CD14-positive monocyte (primary cell): ENCODE measurements at regions of chr16 and their contacts with region 1.

Region 1: DNA sequence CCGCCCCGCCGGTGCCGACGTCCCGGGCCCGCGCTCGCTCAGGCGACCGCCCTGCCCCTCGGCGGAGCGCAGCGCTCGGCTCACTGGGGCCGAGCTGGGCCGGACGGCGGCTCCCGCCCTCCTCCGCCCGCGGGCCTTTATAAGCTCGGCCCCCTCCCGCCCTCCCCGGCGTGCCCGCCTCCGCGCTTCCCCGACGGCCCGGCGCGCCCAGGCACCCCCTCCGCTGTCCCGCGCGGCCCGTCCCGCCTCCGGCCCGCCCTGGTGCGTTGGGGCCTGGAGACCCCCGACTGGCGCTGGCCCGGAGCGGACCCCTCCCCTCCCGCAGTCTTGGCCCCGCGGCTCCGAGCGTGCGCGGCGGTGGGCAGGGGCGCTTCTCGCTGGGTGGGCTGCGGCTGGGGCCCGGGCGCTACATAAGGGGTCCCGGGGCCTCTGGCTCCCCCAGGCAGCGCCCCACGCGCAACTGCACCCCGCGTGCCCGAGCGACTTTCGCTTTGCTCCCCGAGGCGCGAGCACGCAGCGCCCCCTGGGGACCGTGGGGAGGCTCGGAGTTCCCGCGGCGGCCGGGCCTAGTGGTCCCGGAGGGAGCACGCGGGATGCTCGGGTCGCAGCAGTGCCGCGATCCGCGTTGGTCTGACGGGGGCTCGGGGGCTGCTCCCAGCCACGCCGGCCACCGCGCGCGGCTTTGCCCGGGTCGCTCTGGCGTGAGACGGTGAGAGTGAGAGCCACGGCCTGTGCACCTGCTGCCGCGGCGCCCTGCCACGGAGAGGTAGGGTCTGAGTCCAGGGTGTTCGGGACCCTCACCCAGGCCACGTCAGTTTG is at the start of gene PIEZO1:
- DNase-seq: peak; percentile 62 to 75 (median 71)
- H3K4me3 ChIP-seq: peak within 1 kb of the TSS; percentile 47 to 80 (median 73)
- H3K4me3 Mint-ChIP-seq: peak within 1 kb of the TSS; percentile 90 to 93
- H3K27ac ChIP-seq: peak within 1 kb of the TSS; percentile 86 to 99
- H3K27ac Mint-ChIP-seq: peak within 1 kb of the TSS in 6 of 7 donors; percentile 87 to 95 (median 90)
- H3K4me1 ChIP-seq: peaks cover 56 to 64% of the 10 kb centered on the region in 2 donors
- H3K4me1 Mint-ChIP-seq: peaks cover 48% of the 10 kb centered on the region
- H3K27me3 ChIP-seq: no peaks in the 10 kb centered on the region
- H3K27me3 Mint-ChIP-seq: peaks cover 0 to 3% (median 0%) of the 10 kb centered on the region in 3 donors
- CTCF ChIP-seq: peak; percentile 97
- polyA plus RNA-seq, gene PIEZO1: 10.2 to 405 (median 15.0) TPM

Region 2: GRCh38 chr16:88743693-88744576 is 41.4 kb before region 1 on chr16:
- intact Hi-C with region 1: loop called (anchors 2 kb)
- DNase-seq: peak; percentile 46 to 66 (median 58)
- H3K4me3 ChIP-seq: no peak overlapping the region
- H3K4me3 Mint-ChIP-seq: no peak overlapping the region
- H3K27ac ChIP-seq: peak overlapping the region in 1 of 2 donors; percentile 42
- H3K27ac Mint-ChIP-seq: peak overlapping the region in 1 of 7 donors; percentile 35
- H3K4me1 ChIP-seq: peaks cover 15 to 21% of the 10 kb centered on the region in 2 donors
- H3K4me1 Mint-ChIP-seq: peaks cover 35% of the 10 kb centered on the region
- H3K27me3 ChIP-seq: no peaks in the 10 kb centered on the region
- H3K27me3 Mint-ChIP-seq: peaks cover 0 to 1% (median 0%) of the 10 kb centered on the region in 3 donors
- CTCF ChIP-seq: peak; percentile 95

Region 3: DNA sequence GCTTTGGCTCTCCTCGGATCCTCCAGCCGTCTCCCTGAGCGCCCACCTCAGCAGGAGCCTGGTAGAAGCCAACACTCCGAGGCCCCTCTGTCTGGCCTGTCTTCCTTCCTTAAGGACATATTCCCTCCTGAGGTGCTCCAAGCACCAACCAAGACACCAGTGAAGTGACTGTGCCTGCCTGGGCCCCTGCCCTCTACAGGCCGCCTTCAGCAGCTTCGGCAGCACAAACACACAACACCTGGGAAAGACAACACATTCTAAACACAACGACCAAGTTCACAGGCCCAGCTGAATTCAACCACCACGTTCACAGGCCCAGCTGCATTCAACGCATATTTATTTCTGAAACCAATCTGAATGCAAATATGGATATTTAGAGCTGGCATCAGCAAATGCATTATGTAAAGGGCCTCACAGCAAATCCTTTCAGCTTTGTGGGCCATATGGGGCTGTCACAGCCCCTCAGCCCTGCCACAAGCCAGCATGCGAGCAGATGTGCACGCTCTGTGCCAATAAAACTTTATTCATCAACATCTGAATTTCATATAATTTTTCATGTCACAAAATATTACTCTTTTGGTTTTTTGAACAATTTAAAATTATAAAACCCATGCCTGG is 59.2 kb after region 1 on chr16:
- intact Hi-C with region 1: no loop called
- DNase-seq: no peak
- H3K4me3 ChIP-seq: no peak overlapping the region
- H3K4me3 Mint-ChIP-seq: no peak overlapping the region
- H3K27ac ChIP-seq: no peak overlapping the region
- H3K27ac Mint-ChIP-seq: peak overlapping the region in 1 of 7 donors; percentile 3
- H3K4me1 ChIP-seq: peaks cover 21 to 24% of the 10 kb centered on the region in 2 donors
- H3K4me1 Mint-ChIP-seq: peaks cover 20% of the 10 kb centered on the region
- H3K27me3 ChIP-seq: no peaks in the 10 kb centered on the region
- H3K27me3 Mint-ChIP-seq: peaks cover 0 to 3% (median 2%) of the 10 kb centered on the region in 3 donors
- CTCF ChIP-seq: no peak

Region 4: GRCh38 chr16:89945670-89946069 is 1160.4 kb after region 1 on chr16:
- intact Hi-C with region 1: loop called in 1 of 2 experiments (anchors 10 kb)
- DNase-seq: no peak
- H3K4me3 ChIP-seq: no peak overlapping the region
- H3K4me3 Mint-ChIP-seq: peak overlapping the region in 1 of 2 donors; percentile 21
- H3K27ac ChIP-seq: no peak overlapping the region
- H3K27ac Mint-ChIP-seq: no peak overlapping the region
- H3K4me1 ChIP-seq: peaks cover 16 to 24% of the 10 kb centered on the region in 2 donors
- H3K4me1 Mint-ChIP-seq: peaks cover 29% of the 10 kb centered on the region
- H3K27me3 ChIP-seq: peaks cover 7 to 39% of the 10 kb centered on the region in 2 donors
- H3K27me3 Mint-ChIP-seq: peaks cover 40 to 75% (median 64%) of the 10 kb centered on the region in 3 donors
- CTCF ChIP-seq: no peak